ENCODE measurements at regions of chr11 and their contacts with region 1.

Region 1: GRCh38 chr11:118791111-118791965 is at the start of gene DDX6:
- DNase-seq: peak; percentile 81 to 95 (median 93)
- ATAC-seq: peak; percentile 65
- H3K4me3 ChIP-seq: peak within 1 kb of the TSS; percentile 71 to 94
- H3K4me3 Mint-ChIP-seq: peak within 1 kb of the TSS; percentile 100
- H3K27ac ChIP-seq: peak within 1 kb of the TSS; percentile 98
- H3K27ac Mint-ChIP-seq: peak within 1 kb of the TSS; percentile 99
- H3K4me1 ChIP-seq: peaks cover 27% of the 10 kb centered on the region
- H3K4me1 Mint-ChIP-seq: peaks cover 36% of the 10 kb centered on the region
- H3K27me3 ChIP-seq: no peaks in the 10 kb centered on the region
- H3K27me3 Mint-ChIP-seq: no peaks in the 10 kb centered on the region
- CTCF ChIP-seq: peak; percentile 18
- total RNA-seq, gene DDX6: 409 TPM

Region 2: DNA sequence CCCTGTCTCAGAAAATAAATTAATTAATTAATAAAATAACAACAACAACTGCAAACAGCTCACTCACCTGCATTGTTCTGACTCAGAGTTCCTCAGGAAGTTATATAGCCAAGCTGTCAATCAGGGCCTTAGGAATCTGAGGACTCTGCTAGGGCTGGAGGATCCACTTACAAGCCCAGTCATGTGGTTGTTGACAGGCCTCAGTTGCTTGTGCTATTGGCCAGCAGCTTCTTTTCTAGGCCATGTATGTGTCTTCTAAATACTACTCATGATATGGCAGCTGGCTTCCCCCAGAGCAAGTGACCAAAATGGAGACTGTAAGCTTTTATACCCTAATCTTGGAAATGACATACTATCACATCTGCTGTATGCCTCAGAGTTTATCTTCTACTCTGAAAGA is 410.8 kb before region 1 on chr11:
- CTCF ChIA-PET with region 1: no interaction called
- POLR2A ChIA-PET with region 1: no interaction called
- intact Hi-C with region 1: no loop called
- DNase-seq: no peak
- ATAC-seq: no peak
- H3K4me3 ChIP-seq: no peak overlapping the region
- H3K4me3 Mint-ChIP-seq: no peak overlapping the region
- H3K27ac ChIP-seq: no peak overlapping the region
- H3K27ac Mint-ChIP-seq: no peak overlapping the region
- H3K4me1 ChIP-seq: no peaks in the 10 kb centered on the region
- H3K4me1 Mint-ChIP-seq: no peaks in the 10 kb centered on the region
- H3K27me3 ChIP-seq: no peaks in the 10 kb centered on the region
- H3K27me3 Mint-ChIP-seq: no peaks in the 10 kb centered on the region
- CTCF ChIP-seq: no peak

Region 3: GRCh38 chr11:118435893-118436624 is 355.3 kb before region 1 on chr11 and contains the start of gene KMT2A:
- CTCF ChIA-PET with region 1: no interaction called
- POLR2A ChIA-PET with region 1: interaction called, 5 read pairs
- intact Hi-C with region 1: loop called in 1 of 2 experiments (anchors 5 kb)
- DNase-seq: peak; percentile 91 to 99 (median 94)
- ATAC-seq: peak; percentile 62
- H3K4me3 ChIP-seq: peak within 1 kb of the TSS; percentile 89 to 94
- H3K4me3 Mint-ChIP-seq: peak within 1 kb of the TSS; percentile 96
- H3K27ac ChIP-seq: peak within 1 kb of the TSS; percentile 79 to 94
- H3K27ac Mint-ChIP-seq: peak within 1 kb of the TSS; percentile 98
- H3K4me1 ChIP-seq: peaks cover 30% of the 10 kb centered on the region
- H3K4me1 Mint-ChIP-seq: peaks cover 35% of the 10 kb centered on the region
- H3K27me3 ChIP-seq: no peaks in the 10 kb centered on the region
- H3K27me3 Mint-ChIP-seq: no peaks in the 10 kb centered on the region
- CTCF ChIP-seq: no peak
- total RNA-seq, gene KMT2A: 127 to 136 TPM

Region 4: GRCh38 chr11:118699506-118700220 is 91.7 kb before region 1 on chr11:
- CTCF ChIA-PET with region 1: interaction called, 124 read pairs
- POLR2A ChIA-PET with region 1: interaction called, 65 read pairs
- intact Hi-C with region 1: loop called in 1 of 2 experiments (anchors 2 kb)
- DNase-seq: peak; percentile 52 to 96 (median 72)
- ATAC-seq: peak; percentile 96
- H3K4me3 ChIP-seq: peak overlapping the region in 1 of 2 experiments; percentile 32
- H3K4me3 Mint-ChIP-seq: peak overlapping the region; percentile 68
- H3K27ac ChIP-seq: peak overlapping the region; percentile 56 to 73
- H3K27ac Mint-ChIP-seq: peak overlapping the region; percentile 99
- H3K4me1 ChIP-seq: peaks cover 70% of the 10 kb centered on the region
- H3K4me1 Mint-ChIP-seq: peaks cover 67% of the 10 kb centered on the region
- H3K27me3 ChIP-seq: no peaks in the 10 kb centered on the region
- H3K27me3 Mint-ChIP-seq: no peaks in the 10 kb centered on the region
- CTCF ChIP-seq: no peak

Region 5: GRCh38 chr11:118740892-118741291 is 50.4 kb before region 1 on chr11:
- CTCF ChIA-PET with region 1: no interaction called
- POLR2A ChIA-PET with region 1: no interaction called
- intact Hi-C with region 1: no loop called
- DNase-seq: no peak
- ATAC-seq: no peak
- H3K4me3 ChIP-seq: no peak overlapping the region
- H3K4me3 Mint-ChIP-seq: no peak overlapping the region
- H3K27ac ChIP-seq: no peak overlapping the region
- H3K27ac Mint-ChIP-seq: no peak overlapping the region
- H3K4me1 ChIP-seq: no peaks in the 10 kb centered on the region
- H3K4me1 Mint-ChIP-seq: no peaks in the 10 kb centered on the region
- H3K27me3 ChIP-seq: no peaks in the 10 kb centered on the region
- H3K27me3 Mint-ChIP-seq: no peaks in the 10 kb centered on the region
- CTCF ChIP-seq: no peak

Region 6: DNA sequence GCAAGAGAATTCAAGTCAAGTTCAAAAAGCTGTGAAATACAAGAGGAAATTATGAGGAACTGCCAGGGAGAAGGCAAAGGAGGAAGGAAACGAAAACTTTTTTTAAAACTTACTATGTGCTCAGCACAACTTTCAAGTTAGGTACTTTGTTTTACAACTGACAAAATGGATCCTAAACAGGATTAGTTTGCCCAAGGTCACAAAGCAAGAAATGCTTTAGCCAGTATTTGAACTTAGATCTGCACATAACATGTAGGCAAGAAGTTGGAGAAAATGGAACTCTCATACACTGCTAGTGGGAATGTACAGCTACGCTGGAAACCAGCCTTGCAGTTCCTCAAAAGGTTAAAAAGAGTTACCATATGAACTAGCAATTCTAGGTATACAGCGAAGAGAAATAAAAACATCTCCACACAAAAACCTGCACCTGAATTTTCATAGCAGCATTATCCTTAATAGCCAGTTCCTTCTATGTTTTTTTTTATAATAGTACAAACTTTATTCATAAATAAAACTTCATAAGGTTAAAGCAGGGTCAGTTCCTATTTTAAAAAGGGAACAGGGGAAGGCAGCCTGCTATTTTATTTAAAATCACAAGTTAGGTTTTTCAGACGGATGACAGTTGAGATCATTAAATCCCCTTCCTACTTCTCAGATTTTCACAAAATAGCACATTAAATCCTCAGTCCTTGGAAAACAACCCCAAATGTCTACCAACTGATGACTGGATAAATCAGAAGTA is 19.6 kb before region 1 on chr11:
- CTCF ChIA-PET with region 1: interaction called, 34 read pairs
- POLR2A ChIA-PET with region 1: interaction called, 6 read pairs
- intact Hi-C with region 1: loop called in 1 of 2 experiments (anchors 2 kb)
- DNase-seq: no peak
- ATAC-seq: no peak
- H3K4me3 ChIP-seq: no peak overlapping the region
- H3K4me3 Mint-ChIP-seq: peak overlapping the region; percentile 63
- H3K27ac ChIP-seq: peak overlapping the region in 1 of 2 experiments; percentile 0
- H3K27ac Mint-ChIP-seq: peak overlapping the region; percentile 71
- H3K4me1 ChIP-seq: peaks cover 78% of the 10 kb centered on the region
- H3K4me1 Mint-ChIP-seq: peaks cover 89% of the 10 kb centered on the region
- H3K27me3 ChIP-seq: no peaks in the 10 kb centered on the region
- H3K27me3 Mint-ChIP-seq: no peaks in the 10 kb centered on the region
- CTCF ChIP-seq: no peak

Region 7: GRCh38 chr11:118889781-118890180 is 98.4 kb after region 1 on chr11:
- CTCF ChIA-PET with region 1: interaction called, 40 read pairs
- POLR2A ChIA-PET with region 1: interaction called, 182 read pairs
- intact Hi-C with region 1: loop called in 1 of 2 experiments (anchors 1 kb)
- DNase-seq: no peak
- ATAC-seq: no peak
- H3K4me3 ChIP-seq: no peak overlapping the region
- H3K4me3 Mint-ChIP-seq: peak overlapping the region; percentile 18
- H3K27ac ChIP-seq: no peak overlapping the region
- H3K27ac Mint-ChIP-seq: peak overlapping the region; percentile 85
- H3K4me1 ChIP-seq: peaks cover 77% of the 10 kb centered on the region
- H3K4me1 Mint-ChIP-seq: peaks cover 83% of the 10 kb centered on the region
- H3K27me3 ChIP-seq: no peaks in the 10 kb centered on the region
- H3K27me3 Mint-ChIP-seq: no peaks in the 10 kb centered on the region
- CTCF ChIP-seq: no peak

Region 8: GRCh38 chr11:118928108-118928870 is 137.0 kb after region 1 on chr11:
- CTCF ChIA-PET with region 1: interaction called, 82 read pairs
- POLR2A ChIA-PET with region 1: interaction called, 84 read pairs
- intact Hi-C with region 1: loop called (anchors 1 kb)
- DNase-seq: peak; percentile 87 to 100 (median 94)
- ATAC-seq: peak; percentile 58
- H3K4me3 ChIP-seq: peak overlapping the region; percentile 74 to 85
- H3K4me3 Mint-ChIP-seq: peak overlapping the region; percentile 96
- H3K27ac ChIP-seq: peak overlapping the region; percentile 88 to 97
- H3K27ac Mint-ChIP-seq: peak overlapping the region; percentile 98
- H3K4me1 ChIP-seq: peaks cover 29% of the 10 kb centered on the region
- H3K4me1 Mint-ChIP-seq: peaks cover 44% of the 10 kb centered on the region
- H3K27me3 ChIP-seq: no peaks in the 10 kb centered on the region
- H3K27me3 Mint-ChIP-seq: no peaks in the 10 kb centered on the region
- CTCF ChIP-seq: peak; percentile 79

Region 9: DNA sequence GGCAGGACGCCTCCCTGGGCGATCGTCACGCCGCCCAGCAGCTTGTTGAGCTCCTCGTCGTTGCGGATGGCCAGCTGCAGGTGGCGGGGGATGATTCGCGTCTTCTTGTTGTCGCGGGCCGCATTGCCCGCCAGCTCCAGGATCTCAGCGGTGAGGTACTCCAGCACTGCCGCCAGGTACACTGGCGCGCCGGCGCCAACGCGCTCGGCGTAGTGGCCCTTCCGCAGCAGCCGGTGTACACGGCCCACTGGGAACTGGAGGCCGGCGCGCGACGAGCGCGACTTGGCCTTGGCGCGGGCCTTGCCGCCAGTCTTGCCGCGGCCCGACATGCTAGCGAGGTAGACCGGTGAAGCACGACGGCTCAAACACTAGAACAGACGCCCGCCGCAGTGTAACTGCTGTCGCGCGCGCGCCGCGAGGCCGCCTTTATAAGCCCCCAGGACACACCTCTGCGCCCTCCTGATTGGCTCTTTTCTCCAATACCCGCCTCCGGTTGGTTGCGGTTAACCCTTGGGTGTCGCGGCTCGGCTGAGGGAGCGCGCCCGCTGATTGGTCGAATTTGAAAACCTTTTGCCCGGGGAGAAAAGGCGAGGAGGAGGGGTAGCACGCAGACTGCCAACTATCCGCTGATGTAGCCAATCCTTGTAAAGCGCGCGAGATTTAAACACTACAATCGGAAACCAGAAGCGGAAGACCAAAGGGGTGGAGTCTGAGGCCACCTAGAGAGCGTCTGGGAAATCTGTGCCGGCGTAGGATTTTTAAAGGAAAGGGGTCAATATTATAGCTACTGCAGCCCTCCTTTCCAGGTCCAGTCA is 303.9 kb after region 1 on chr11:
- CTCF ChIA-PET with region 1: no interaction called
- POLR2A ChIA-PET with region 1: no interaction called
- intact Hi-C with region 1: loop called in 1 of 2 experiments (anchors 2 kb)
- DNase-seq: peak; percentile 98 to 100 (median 99)
- ATAC-seq: peak; percentile 86
- H3K4me3 ChIP-seq: peak overlapping the region; percentile 78 to 88
- H3K4me3 Mint-ChIP-seq: peak overlapping the region; percentile 93
- H3K27ac ChIP-seq: peak overlapping the region; percentile 75 to 78
- H3K27ac Mint-ChIP-seq: peak overlapping the region; percentile 91
- H3K4me1 ChIP-seq: peaks cover 23% of the 10 kb centered on the region
- H3K4me1 Mint-ChIP-seq: peaks cover 34% of the 10 kb centered on the region
- H3K27me3 ChIP-seq: no peaks in the 10 kb centered on the region
- H3K27me3 Mint-ChIP-seq: no peaks in the 10 kb centered on the region
- CTCF ChIP-seq: no peak

Region 10: GRCh38 chr11:119624102-119624615 is 832.8 kb after region 1 on chr11:
- CTCF ChIA-PET with region 1: no interaction called
- POLR2A ChIA-PET with region 1: no interaction called
- intact Hi-C with region 1: no loop called
- DNase-seq: peak in 3 of 9 experiments; percentile 3 to 18 (median 11)
- ATAC-seq: no peak
- H3K4me3 ChIP-seq: no peak overlapping the region
- H3K4me3 Mint-ChIP-seq: no peak overlapping the region
- H3K27ac ChIP-seq: no peak overlapping the region
- H3K27ac Mint-ChIP-seq: no peak overlapping the region
- H3K4me1 ChIP-seq: no peaks in the 10 kb centered on the region
- H3K4me1 Mint-ChIP-seq: no peaks in the 10 kb centered on the region
- H3K27me3 ChIP-seq: no peaks in the 10 kb centered on the region
- H3K27me3 Mint-ChIP-seq: peaks cover 26% of the 10 kb centered on the region
- CTCF ChIP-seq: peak; percentile 66

Measured in CD8-positive, alpha-beta T cell (primary cell).